ENCODE measurements at regions of chr12 and their contacts with region 1.

Region 1: DNA sequence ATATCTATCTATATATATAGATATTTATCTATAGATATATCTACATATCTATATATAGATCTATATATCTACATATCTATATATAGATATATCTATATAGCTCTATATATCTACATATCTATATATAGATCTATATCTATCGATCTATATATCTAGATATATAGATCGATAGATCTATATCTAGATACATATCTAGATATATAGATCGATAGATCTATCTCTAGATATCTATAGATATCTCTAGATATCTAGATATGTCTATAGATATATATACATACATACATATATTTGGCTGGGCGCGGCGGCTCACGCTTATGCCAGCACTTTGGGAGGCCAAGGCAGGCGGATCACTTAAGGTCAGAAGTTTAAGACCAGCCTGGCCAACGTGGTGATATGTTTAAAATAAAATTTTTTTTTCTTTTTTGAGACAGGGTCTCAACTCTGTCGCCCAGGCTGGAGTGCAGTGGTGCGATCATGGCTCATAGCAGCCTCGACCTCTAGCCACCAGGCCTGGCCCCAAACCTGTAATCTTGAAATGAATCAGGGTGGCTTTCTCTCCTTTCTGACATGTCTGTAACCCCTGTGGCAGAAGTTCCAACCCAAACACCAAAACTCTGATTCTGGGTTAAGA is 18.1 kb downstream of the ARPC3 start:
- DNase-seq: peak in 1 of 3 donors; percentile 21
- ATAC-seq: no peak
- H3K4me3 ChIP-seq: peak overlapping the region; percentile 10
- H3K4me1 ChIP-seq: no peaks in the 10 kb centered on the region
- CTCF ChIP-seq: no peak

Region 2: GRCh38 chr12:110093631-110094311 is 338.3 kb before region 1 on chr12:
- intact Hi-C with region 1: loop called in 1 of 2 experiments (anchors 10 kb)
- DNase-seq: no peak
- ATAC-seq: no peak
- H3K4me3 ChIP-seq: no peak overlapping the region
- H3K4me1 ChIP-seq: no peaks in the 10 kb centered on the region
- CTCF ChIP-seq: no peak

Region 3: GRCh38 chr12:110100315-110100970 is 331.6 kb before region 1 on chr12:
- intact Hi-C with region 1: loop called (anchors 5 to 10 kb)
- DNase-seq: peak in 2 of 3 donors; percentile 50 to 80
- ATAC-seq: peak; percentile 91
- H3K4me3 ChIP-seq: no peak overlapping the region
- H3K4me1 ChIP-seq: no peaks in the 10 kb centered on the region
- CTCF ChIP-seq: peak; percentile 75

Measured in mucosa of descending colon (tissue), 3 donors.